MCF 10A (cell line): ENCODE measurements at regions of chr19 and their contacts with region 1.

Region 1: DNA sequence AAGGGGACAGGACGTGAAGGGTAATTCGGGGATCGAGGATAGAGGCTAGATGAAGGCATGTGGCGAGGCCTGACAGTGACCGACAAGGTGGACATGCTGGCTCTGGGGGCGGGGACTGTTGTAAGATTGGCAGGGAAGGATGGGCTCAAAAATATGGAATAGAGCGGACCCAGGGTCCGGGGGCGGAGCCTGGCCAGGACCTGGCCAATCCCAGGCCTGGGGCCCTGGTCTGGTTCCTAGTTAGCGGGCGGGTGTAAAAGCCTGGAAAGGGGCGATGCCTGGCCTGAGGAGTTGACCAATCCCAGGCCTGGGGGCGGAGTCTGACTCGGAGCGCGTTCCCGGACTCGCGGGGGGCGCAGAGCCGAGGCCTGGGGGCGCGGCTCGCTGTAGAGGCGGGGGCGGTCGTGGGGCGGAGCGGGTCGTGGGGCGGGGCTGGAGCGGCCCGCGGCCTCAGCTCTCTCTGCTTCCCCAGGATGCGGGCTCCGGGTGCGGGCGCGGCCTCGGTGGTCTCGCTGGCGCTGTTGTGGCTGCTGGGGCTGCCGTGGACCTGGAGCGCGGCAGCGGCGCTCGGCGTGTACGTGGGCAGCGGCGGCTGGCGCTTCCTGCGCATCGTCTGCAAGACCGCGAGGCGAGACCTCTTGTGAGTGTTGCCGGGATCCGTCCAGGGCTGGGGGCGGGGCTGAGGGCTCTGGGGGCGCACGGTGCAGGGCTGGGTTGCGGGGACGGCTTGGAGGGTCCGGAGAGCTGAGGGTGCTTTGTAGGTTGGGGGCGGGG is at the start of gene SLC27A1:
- DNase-seq: peak; percentile 99
- H3K4me3 Mint-ChIP-seq: peak within 1 kb of the TSS; percentile 91
- H3K27ac Mint-ChIP-seq: peak within 1 kb of the TSS; percentile 97
- H3K4me1 Mint-ChIP-seq: peaks cover 41% of the 10 kb centered on the region
- H3K27me3 Mint-ChIP-seq: no peaks in the 10 kb centered on the region
- CTCF ChIP-seq: no peak
- total RNA-seq, gene SLC27A1: 3.4 and 5.0 TPM in 2 replicates

Region 2: DNA sequence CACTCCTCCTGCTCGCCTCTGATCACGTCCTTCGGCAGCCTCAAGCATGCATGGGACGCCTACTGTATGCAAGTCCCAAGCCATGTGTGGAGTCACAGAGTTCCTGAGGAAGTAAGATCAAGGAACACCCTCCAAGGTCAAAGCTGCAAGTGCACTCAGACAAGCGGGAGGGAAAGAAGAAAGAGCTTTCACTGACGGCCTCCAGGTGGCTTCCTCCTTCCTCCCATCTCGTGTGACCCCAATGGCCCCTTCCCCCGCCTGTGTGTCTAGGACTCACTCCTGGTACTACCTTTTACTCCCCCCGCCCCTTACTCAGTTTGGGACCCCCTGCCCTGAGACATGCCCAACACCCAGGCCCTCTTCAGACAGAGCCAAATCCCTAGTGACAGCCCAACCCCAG is 401.0 kb before region 1 on chr19:
- CTCF ChIA-PET with region 1: interaction called, 3 read pairs
- POLR2A ChIA-PET with region 1: no interaction called
- intact Hi-C with region 1: loop called (anchors 10 kb)
- DNase-seq: no peak
- H3K4me3 Mint-ChIP-seq: no peak overlapping the region
- H3K27ac Mint-ChIP-seq: no peak overlapping the region
- H3K4me1 Mint-ChIP-seq: peaks cover 10% of the 10 kb centered on the region
- H3K27me3 Mint-ChIP-seq: no peaks in the 10 kb centered on the region
- CTCF ChIP-seq: no peak

Region 3: DNA sequence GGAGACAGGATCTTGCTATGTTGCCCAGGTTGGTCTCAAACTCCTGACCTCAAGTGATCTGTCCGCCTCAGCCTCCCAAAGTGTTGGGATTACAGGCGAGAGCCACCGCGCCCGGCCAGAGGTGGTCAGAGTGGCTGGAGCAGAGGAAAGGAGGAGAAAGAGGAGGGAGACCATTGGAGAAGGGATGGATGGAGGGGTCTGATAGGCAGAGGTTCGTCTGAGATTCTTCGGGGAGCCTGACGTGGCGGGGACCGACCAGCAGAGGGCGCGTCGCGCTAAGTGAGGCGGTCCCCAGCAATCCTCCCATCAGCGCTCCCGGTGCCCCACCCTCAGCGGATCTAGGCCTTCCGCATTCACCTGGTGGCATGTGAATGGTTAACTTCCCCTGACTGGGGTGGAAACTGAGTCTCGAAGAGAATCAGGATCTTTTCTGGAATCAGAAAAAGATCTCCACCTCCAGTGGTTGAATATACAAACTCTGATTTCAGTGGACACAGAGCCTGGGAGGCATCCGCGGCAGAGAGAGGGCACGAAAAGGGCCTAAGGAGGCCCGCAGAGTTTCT is 124.1 kb before region 1 on chr19:
- CTCF ChIA-PET with region 1: interaction called, 5 read pairs
- POLR2A ChIA-PET with region 1: no interaction called
- intact Hi-C with region 1: loop called (anchors 1 kb)
- DNase-seq: peak; percentile 79
- H3K4me3 Mint-ChIP-seq: no peak overlapping the region
- H3K27ac Mint-ChIP-seq: no peak overlapping the region
- H3K4me1 Mint-ChIP-seq: peaks cover 15% of the 10 kb centered on the region
- H3K27me3 Mint-ChIP-seq: no peaks in the 10 kb centered on the region
- CTCF ChIP-seq: peak; percentile 90

Region 4: GRCh38 chr19:17450264-17451075 is 19.8 kb before region 1 on chr19:
- CTCF ChIA-PET with region 1: interaction called, 6 read pairs
- POLR2A ChIA-PET with region 1: interaction called, 6 read pairs
- intact Hi-C with region 1: loop called (anchors 2 kb)
- DNase-seq: peak; percentile 94
- H3K4me3 Mint-ChIP-seq: no peak overlapping the region
- H3K27ac Mint-ChIP-seq: peak overlapping the region; percentile 14
- H3K4me1 Mint-ChIP-seq: peaks cover 5% of the 10 kb centered on the region
- H3K27me3 Mint-ChIP-seq: no peaks in the 10 kb centered on the region
- CTCF ChIP-seq: no peak

Region 5: DNA sequence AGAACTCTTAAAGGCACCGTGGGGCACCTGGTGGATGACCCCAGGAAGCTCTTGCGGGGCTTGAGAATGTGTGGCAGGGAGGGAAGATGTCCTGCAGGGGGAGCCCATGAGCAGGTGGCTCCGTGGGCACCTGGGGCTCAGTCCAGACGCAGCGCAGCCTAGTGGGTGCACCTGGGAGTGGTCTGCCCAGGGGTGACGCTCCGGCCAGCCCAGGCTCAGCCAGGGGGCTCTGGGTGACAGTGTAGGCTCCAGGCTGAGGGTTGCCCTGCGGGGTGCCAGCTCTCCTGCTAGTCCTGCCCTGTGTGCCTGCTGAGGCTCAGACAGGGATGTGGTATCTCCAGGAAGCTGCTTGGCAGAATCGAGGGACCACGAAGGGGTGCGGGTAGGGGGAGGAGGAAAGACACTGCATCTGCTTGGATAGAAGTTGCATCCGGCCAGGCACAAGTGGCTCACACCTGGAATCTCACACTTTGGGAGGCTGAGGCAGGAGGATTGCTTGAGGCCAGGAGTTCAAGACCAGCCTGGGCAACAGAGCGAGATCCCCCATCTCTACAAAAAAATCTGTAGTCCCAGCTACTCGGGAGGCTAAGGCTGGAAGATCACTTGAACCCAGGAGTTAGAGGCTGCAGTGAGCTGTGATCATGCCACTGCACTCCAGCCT is 26.2 kb after region 1 on chr19:
- CTCF ChIA-PET with region 1: interaction called, 19 read pairs
- POLR2A ChIA-PET with region 1: interaction called, 3 read pairs
- intact Hi-C with region 1: no loop called
- DNase-seq: peak; percentile 86
- H3K4me3 Mint-ChIP-seq: no peak overlapping the region
- H3K27ac Mint-ChIP-seq: no peak overlapping the region
- H3K4me1 Mint-ChIP-seq: peaks cover 15% of the 10 kb centered on the region
- H3K27me3 Mint-ChIP-seq: no peaks in the 10 kb centered on the region
- CTCF ChIP-seq: peak; percentile 90